ENCODE measurements at regions of chr5 and their contacts with region 1.

Region 1: DNA sequence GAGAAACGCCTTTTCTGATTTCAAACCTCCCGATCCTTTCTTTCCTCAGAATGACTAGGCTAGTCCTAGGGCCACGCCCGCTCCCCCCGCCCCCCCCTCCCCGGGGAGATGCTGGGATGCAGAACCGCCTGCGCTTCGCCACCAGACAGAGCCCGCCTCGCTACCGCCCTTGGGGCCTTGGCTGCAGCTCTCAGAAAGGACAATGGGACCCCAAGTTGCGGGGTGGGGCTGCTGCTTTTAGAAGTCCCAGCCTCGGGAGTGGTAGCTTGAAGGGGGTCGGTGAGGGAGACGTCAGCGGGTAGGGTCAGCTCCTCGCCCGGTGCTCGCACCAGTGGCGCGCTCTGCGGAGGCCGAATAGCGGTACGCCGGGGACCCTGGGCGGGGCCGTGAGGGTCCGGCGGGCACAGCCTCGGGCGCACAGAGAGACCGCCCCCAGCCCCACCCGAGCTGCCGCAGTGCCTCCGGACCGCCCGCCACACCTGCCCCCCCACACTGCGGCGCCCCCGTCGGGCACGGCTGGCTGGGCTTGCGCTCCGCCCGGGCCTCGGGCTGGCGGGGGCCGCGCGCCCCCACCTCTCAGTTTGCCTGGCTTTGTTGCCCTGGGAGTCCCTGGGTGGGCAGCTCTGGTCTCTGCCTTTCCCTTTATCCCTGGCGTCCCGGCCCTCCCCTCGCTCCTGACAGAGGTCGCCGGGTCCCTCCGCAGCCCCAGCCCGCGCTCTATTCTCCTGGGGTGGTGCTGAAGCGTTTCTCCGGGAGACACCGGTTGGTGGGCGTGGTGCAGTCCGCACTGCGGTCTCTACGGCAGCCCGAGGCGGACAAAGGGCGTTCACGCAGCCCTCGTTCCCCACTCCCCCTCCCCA is 1.2 kb downstream of the MAP1B start:
- DNase-seq: peak; percentile 27
- H3K4me3 ChIP-seq: peak overlapping the region; percentile 46 to 54
- H3K27ac ChIP-seq: peak overlapping the region; percentile 63 to 64
- H3K4me1 ChIP-seq: no peaks in the 10 kb centered on the region
- H3K27me3 ChIP-seq: no peaks in the 10 kb centered on the region
- CTCF ChIP-seq: no peak
- POLR2A ChIP-seq: no peak

Region 2: GRCh38 chr5:71782771-71783770 is 325.4 kb before region 1 on chr5:
- intact Hi-C with region 1: loop called (anchors 5 kb)
- DNase-seq: peak; percentile 75
- H3K4me3 ChIP-seq: peak overlapping the region in 1 of 2 donors; percentile 13
- H3K27ac ChIP-seq: peak overlapping the region; percentile 32 to 34
- H3K4me1 ChIP-seq: no peaks in the 10 kb centered on the region
- H3K27me3 ChIP-seq: no peaks in the 10 kb centered on the region
- CTCF ChIP-seq: peak; percentile 51 to 85 (median 82)
- POLR2A ChIP-seq: no peak

Region 3: DNA sequence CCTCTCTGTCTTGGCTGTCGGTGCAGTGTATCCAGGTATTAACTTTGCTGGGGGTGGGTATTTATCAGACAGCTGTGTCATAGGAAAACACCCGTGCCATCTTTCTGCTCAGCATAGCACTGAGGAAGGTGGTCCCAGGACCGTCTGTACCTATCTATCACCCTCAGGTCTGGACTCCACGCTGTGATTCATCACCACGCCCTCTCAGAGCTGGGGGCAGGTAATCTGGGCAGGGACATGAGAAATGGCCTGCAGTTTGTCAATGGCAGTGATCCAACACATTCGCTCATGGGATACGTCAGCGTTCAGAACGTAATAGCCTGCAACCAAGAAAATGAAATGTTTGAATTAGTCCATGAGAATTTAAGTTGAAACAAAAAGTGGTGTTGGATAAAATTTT is 152.7 kb before region 1 on chr5:
- intact Hi-C with region 1: loop called (anchors 5 kb)
- DNase-seq: no peak
- H3K4me3 ChIP-seq: no peak overlapping the region
- H3K27ac ChIP-seq: no peak overlapping the region
- H3K4me1 ChIP-seq: peaks cover 6% of the 10 kb centered on the region
- H3K27me3 ChIP-seq: no peaks in the 10 kb centered on the region
- CTCF ChIP-seq: no peak
- POLR2A ChIP-seq: no peak

Region 4: GRCh38 chr5:72018146-72018803 is 90.2 kb before region 1 on chr5:
- intact Hi-C with region 1: loop called (anchors 10 kb)
- DNase-seq: no peak
- H3K4me3 ChIP-seq: no peak overlapping the region
- H3K27ac ChIP-seq: no peak overlapping the region
- H3K4me1 ChIP-seq: no peaks in the 10 kb centered on the region
- H3K27me3 ChIP-seq: no peaks in the 10 kb centered on the region
- CTCF ChIP-seq: peak; percentile 56 to 79 (median 72)
- POLR2A ChIP-seq: no peak

Region 5: DNA sequence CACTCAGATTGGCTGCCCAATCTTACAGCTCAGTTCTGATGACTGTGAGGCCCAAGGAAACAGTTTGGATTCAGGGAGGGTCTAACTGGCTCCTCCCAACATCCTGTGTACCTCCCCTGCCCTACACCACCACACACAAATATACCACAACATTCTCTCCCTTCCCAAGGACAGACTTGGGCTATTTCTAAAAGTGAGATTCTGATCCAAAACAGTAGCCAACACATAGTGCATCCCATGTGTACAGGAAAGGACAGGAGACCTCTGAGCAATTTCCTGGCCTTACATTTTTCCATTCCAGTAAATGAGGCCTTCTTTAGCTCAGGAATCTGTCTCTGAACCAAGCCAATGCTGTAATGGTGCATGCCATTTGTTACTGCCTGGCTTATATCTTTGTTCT is 377.9 kb after region 1 on chr5:
- intact Hi-C with region 1: no loop called
- DNase-seq: no peak
- H3K4me3 ChIP-seq: no peak overlapping the region
- H3K27ac ChIP-seq: no peak overlapping the region
- H3K4me1 ChIP-seq: no peaks in the 10 kb centered on the region
- H3K27me3 ChIP-seq: no peaks in the 10 kb centered on the region
- CTCF ChIP-seq: no peak
- POLR2A ChIP-seq: no peak

Measured in prostate gland (tissue), 2 donors.